ENCODE measurements at regions of chr10 and their contacts with region 1.

Region 1: GRCh38 chr10:93816123-93816747 is 58.5 kb downstream of the LGI1 start:
- DNase-seq: peak; percentile 60
- ATAC-seq: peak; percentile 77
- H3K4me3 ChIP-seq: peak overlapping the region; percentile 4 to 22; a peak in 3 of 4 replicates
- H3K27ac ChIP-seq: no peak overlapping the region
- H3K4me1 ChIP-seq: peaks cover 6 to 46% of the 10 kb centered on the region in 2 experiments; a peak in 3 of 4 replicates
- H3K27me3 ChIP-seq: no peaks in the 10 kb centered on the region
- CTCF ChIP-seq: peak; percentile 81 to 83 (median 83)
- POLR2A ChIP-seq: no peak
- RAD21 ChIP-seq: peak; percentile 81

Region 2: GRCh38 chr10:93702211-93703001 is 113.8 kb before region 1 on chr10 and contains the start of gene FRA10AC1:
- CTCF ChIA-PET with region 1: interaction called, 9 read pairs
- POLR2A ChIA-PET with region 1: no interaction called
- RAD21 ChIA-PET with region 1: interaction called in 1 of 2 experiments, 3 read pairs
- intact Hi-C with region 1: loop called (anchors 1 kb)
- DNase-seq: peak; percentile 83
- ATAC-seq: peak; percentile 92
- H3K4me3 ChIP-seq: peak within 1 kb of the TSS; percentile 66 to 84
- H3K27ac ChIP-seq: peak within 1 kb of the TSS; percentile 71
- H3K4me1 ChIP-seq: peaks cover 3 to 14% of the 10 kb centered on the region in 2 experiments
- H3K27me3 ChIP-seq: no peaks in the 10 kb centered on the region
- CTCF ChIP-seq: peak in 2 of 3 experiments; percentile 42 to 57; a peak in 4 of 6 replicates
- POLR2A ChIP-seq: peak; percentile 86
- RAD21 ChIP-seq: peak; percentile 64
- total RNA-seq, gene FRA10AC1: 21.9 TPM

Region 3: DNA sequence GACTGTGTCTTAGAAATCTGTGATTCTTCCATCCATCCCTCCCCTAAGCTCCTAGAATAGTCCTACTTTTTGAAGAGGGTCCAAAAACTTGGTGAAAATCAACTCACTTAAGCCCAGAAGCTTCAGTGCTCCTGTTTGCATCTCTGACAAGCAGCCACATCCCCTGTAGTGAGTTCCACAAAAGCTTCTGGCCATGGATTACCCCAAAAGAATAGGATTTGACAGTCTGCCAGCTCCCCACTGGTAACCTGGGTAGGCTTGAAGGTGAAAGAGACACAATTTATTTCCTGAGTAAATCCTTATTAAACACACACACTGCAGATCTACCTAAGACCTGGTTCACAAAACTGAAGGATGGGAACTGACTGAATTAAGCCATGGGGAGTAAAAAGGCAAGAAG is 12.0 kb before region 1 on chr10:
- CTCF ChIA-PET with region 1: interaction called, 13 read pairs
- POLR2A ChIA-PET with region 1: no interaction called
- RAD21 ChIA-PET with region 1: no interaction called
- intact Hi-C with region 1: no loop called
- DNase-seq: no peak
- ATAC-seq: no peak
- H3K4me3 ChIP-seq: no peak overlapping the region
- H3K27ac ChIP-seq: no peak overlapping the region
- H3K4me1 ChIP-seq: no peaks in the 10 kb centered on the region
- H3K27me3 ChIP-seq: peaks cover 7% of the 10 kb centered on the region; the same call in 1 of the 2 replicates
- CTCF ChIP-seq: no peak
- POLR2A ChIP-seq: no peak
- RAD21 ChIP-seq: no peak

Region 4: DNA sequence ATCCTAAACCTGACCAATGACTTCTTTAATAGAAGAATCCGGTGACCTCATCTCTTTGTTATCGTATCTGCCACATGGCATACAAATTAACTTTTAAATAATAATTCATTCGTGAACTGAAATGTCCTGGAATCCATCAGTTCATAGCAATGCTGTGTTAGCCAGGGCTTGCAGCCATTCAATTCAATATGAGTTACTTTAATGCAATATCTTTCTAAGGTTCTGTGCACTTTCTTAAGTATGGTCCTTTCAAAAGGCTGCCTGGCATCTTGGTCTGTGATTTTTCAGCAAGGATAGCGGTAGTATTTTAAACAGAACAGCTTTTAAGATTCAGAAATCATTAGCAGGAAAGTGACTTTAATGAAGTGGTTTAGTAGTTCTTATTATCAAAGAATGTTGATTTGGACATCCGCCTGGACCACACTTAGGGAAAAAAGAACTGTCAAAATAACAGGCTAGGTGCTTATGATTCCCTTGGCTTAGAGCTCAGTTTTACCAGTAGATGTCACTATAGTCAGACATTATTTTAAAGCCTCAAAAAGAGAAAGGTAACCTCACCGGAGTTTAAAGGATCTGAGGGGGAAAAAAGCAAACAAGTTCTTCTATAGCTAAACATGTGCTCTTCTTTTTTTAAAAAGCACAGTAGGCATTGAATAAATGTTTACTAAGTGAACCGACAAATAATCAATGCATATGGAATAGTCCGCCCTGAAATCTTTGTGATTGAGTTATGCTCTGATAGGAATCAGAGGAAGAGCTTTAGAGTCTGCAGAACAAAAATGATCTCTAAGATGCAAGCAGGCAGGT is 100.2 kb after region 1 on chr10:
- CTCF ChIA-PET with region 1: interaction called, 14 read pairs
- POLR2A ChIA-PET with region 1: no interaction called
- RAD21 ChIA-PET with region 1: no interaction called
- intact Hi-C with region 1: loop called (anchors 5 kb)
- DNase-seq: peak; percentile 22
- ATAC-seq: peak; percentile 78
- H3K4me3 ChIP-seq: no peak overlapping the region
- H3K27ac ChIP-seq: no peak overlapping the region
- H3K4me1 ChIP-seq: no peaks in the 10 kb centered on the region
- H3K27me3 ChIP-seq: no peaks in the 10 kb centered on the region
- CTCF ChIP-seq: peak; percentile 51 to 68 (median 60); a peak in 5 of 6 replicates
- POLR2A ChIP-seq: no peak
- RAD21 ChIP-seq: peak; percentile 70

Region 5: DNA sequence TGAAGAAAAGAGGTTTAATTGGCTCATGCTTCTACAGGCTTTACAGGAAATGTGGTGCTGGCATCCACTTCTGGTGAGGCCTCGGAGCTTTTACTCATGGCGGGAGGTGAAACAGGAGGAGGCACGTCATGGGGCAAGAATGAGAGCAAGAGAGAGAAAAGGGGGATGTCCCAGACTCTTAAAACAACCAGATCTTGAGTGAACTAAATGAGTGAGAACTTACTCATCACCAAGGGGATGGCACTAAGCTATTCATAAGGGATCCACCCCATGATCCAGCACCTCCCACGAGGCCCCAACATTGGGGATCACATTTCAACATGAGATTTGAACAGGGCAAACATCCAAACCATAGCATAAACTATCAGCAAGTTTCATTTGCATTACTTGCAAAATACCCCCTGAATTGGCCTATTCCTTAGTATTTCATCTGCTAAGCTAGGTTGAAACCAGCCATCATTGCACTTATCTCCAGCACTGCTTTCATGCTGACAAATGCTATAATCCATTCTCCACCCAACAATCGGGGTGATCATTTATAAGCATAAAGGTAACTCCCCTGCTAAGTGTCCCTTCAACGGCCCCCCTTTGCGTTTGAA is 367.5 kb after region 1 on chr10:
- CTCF ChIA-PET with region 1: no interaction called
- POLR2A ChIA-PET with region 1: no interaction called
- RAD21 ChIA-PET with region 1: no interaction called
- intact Hi-C with region 1: no loop called
- DNase-seq: no peak
- ATAC-seq: no peak
- H3K4me3 ChIP-seq: no peak overlapping the region
- H3K27ac ChIP-seq: no peak overlapping the region
- H3K4me1 ChIP-seq: peaks cover 0 to 6% of the 10 kb centered on the region in 2 experiments; a peak in 1 of 4 replicates
- H3K27me3 ChIP-seq: no peaks in the 10 kb centered on the region
- CTCF ChIP-seq: no peak
- POLR2A ChIP-seq: no peak
- RAD21 ChIP-seq: no peak

Region 6: DNA sequence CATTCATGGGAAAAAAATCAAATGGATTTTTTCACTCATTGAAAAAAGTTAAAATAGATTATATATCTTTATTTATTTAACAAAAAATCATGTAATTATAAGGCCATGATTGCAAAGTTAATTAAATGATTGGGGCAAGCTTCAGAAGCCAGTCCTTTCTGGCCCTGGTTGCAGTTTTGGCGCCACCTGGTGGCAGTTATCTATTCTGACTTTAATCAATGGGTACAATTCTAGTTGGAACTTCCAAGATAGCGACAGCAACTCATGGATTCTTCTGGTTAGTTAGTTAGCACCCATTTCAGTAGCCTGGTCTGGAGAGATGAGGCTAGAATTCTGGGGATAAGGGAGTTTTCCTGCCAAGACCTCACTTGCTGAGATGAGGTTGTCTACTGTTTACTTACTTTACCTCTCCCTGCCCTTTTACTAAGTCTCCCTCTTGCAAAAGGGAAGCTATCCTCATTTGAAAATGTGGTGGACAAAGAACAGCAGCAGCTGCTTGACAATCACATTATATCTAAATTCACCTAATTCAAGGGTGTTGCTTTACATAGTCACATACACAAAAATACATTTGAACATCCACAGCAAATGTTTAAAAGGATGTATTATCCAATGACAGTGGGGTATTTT is 504.2 kb after region 1 on chr10:
- CTCF ChIA-PET with region 1: interaction called, 38 read pairs
- POLR2A ChIA-PET with region 1: no interaction called
- RAD21 ChIA-PET with region 1: no interaction called
- intact Hi-C with region 1: loop called (anchors 1 kb)
- DNase-seq: peak; percentile 40
- ATAC-seq: peak; percentile 73
- H3K4me3 ChIP-seq: no peak overlapping the region
- H3K27ac ChIP-seq: no peak overlapping the region
- H3K4me1 ChIP-seq: no peaks in the 10 kb centered on the region
- H3K27me3 ChIP-seq: no peaks in the 10 kb centered on the region
- CTCF ChIP-seq: peak; percentile 71 to 80 (median 80)
- POLR2A ChIP-seq: no peak
- RAD21 ChIP-seq: peak; percentile 75

Measured in HCT116 (cell line).